Activated CD4-positive, alpha-beta memory T cell treated with anti-CD3 and anti-CD28 coated beads, Interleukin-2, amount 10 ng/mL, durations not matched to agents 7 days and 5 days (primary cell): ENCODE measurements at regions of chr12 and their contacts with region 1.

Region 1: DNA sequence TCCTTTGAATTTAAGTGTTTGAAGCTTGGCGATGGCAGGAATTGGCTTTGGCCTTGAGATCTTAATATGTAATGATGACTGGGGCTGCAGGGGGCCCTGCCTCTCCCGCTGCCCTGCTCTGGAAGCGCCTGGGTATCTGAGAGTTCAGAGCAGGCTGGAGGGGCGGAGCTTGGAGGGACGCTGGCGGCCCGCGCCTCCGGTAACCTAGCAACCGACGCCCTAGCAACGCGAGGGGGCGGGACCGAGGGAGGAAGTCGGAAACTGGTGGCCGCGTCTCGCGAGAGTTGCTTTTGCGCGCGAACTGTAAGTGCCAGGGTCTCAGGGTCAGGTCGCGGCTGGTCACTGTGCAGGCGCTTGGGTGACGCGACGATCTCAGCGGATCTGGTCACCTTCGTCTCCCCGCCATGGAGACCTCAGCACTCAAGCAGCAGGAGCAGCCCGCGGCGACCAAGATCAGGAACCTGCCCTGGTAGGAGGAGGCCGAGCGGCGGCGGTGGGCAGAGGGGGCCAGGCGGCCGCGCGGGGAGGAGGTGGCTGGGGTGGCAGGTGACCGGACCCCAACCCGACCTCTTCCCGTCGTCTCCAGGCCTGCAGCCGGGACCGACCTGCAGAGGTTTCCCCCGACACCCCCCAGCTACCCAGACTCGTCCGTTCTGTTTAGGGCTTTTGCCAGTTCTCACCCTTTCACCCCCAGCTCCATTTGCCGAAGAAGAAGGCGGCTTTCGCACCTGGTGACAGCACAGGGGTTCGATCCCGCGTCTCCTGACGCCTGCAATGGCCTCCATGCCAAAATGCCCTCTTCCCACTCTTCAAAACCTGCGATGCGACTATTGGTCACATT is at the start of gene RFC5:
- DNase-seq: peak; percentile 98
- H3K4me3 Mint-ChIP-seq: peak within 1 kb of the TSS; percentile 84
- H3K27ac Mint-ChIP-seq: peak within 1 kb of the TSS; percentile 84
- H3K4me1 Mint-ChIP-seq: peaks cover 29% of the 10 kb centered on the region
- H3K27me3 Mint-ChIP-seq: peaks cover 4% of the 10 kb centered on the region
- total RNA-seq, gene RFC5: 39.7 to 41.0 TPM

Region 2: DNA sequence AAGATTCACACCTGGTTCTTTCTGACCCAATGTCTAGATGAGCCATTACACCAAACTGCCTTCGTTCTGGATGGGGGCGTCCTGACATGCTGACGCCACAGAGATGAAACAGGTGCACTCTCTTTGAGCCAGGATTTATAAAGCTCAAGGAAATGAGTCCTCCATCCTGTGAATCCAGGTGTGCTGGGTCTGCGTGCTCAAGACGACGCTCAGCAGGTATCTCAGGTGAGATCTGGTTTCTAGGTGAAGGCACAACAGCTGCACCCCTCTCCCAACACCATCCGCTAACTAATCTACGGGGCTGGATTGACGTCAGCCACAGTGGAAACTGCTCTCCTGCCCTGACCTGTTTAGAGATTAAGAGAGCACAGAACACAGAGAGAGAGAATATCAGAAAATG is 109.4 kb before region 1 on chr12:
- CTCF ChIA-PET with region 1: no interaction called
- POLR2A ChIA-PET with region 1: no interaction called
- DNase-seq: no peak
- H3K4me3 Mint-ChIP-seq: no peak overlapping the region
- H3K27ac Mint-ChIP-seq: no peak overlapping the region
- H3K4me1 Mint-ChIP-seq: no peaks in the 10 kb centered on the region
- H3K27me3 Mint-ChIP-seq: no peaks in the 10 kb centered on the region

Region 3: DNA sequence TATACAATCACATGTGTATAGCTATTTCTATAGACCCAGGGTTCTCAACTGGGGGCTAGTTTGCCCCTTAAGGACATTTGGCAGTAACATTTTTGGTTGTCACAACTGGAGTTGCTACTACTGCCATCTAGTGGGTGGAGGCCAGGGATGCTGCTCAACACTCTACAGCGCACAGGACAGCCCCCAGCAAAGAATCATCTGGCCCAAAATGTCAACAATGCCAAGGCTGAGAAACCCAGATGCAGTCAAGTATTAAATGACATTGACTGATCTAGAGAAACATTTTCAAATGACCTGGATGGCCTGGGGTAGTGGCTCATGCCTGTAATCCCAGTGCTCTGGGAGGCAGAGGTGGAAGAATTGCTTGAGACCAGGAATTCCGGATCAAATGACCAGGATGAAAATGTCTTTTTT is 38.5 kb after region 1 on chr12:
- CTCF ChIA-PET with region 1: interaction called, 14 read pairs
- POLR2A ChIA-PET with region 1: interaction called, 40 read pairs
- DNase-seq: peak; percentile 77
- H3K4me3 Mint-ChIP-seq: no peak overlapping the region
- H3K27ac Mint-ChIP-seq: no peak overlapping the region
- H3K4me1 Mint-ChIP-seq: peaks cover 49% of the 10 kb centered on the region
- H3K27me3 Mint-ChIP-seq: no peaks in the 10 kb centered on the region

Region 4: DNA sequence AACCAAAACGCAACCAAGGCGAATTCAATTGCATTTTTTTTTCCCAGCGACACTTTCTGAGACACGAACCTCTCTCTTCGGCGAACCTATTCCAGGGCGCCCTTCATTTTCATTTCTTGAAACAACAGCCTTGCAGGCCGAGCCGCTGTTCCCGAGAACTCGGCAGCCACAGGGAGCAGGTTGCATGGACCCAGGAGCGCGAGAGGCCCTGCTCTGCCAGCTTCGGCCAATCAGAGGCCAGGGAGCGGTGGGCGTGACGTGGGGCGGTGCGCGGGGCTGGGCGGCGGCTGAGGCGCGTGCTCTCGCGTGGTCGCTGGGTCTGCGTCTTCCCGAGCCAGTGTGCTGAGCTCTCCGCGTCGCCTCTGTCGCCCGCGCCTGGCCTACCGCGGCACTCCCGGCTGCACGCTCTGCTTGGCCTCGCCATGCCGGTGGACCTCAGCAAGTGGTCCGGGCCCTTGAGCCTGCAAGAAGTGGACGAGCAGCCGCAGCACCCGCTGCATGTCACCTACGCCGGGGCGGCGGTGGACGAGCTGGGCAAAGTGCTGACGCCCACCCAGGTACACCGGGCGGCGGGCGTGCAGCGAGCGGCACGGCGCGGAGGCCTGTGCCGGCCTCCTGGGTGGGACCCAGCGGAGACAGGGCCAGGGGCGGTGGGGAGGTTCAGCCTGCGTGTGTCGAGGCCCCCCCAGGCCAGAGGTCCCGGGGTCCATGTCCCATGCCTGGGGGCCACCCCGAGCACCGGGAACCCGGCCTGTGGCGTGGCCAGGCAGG is 119.3 kb after region 1 on chr12 and contains the start of gene PEBP1:
- CTCF ChIA-PET with region 1: no interaction called
- POLR2A ChIA-PET with region 1: interaction called, 11 read pairs
- DNase-seq: peak; percentile 94
- H3K4me3 Mint-ChIP-seq: peak within 1 kb of the TSS; percentile 82
- H3K27ac Mint-ChIP-seq: peak within 1 kb of the TSS; percentile 84
- H3K4me1 Mint-ChIP-seq: peaks cover 33% of the 10 kb centered on the region
- H3K27me3 Mint-ChIP-seq: no peaks in the 10 kb centered on the region
- total RNA-seq, gene PEBP1: 75.5 to 76.7 TPM